Ascending aorta (tissue), 2 donors: ENCODE measurements at regions of chr3 and their contacts with region 1.

Region 1: GRCh38 chr3:41198950-41199865 is at the start of gene CTNNB1:
- DNase-seq: peak; percentile 74 to 96
- H3K4me3 ChIP-seq: peak within 1 kb of the TSS; percentile 100
- H3K27ac ChIP-seq: peak within 1 kb of the TSS; percentile 98 to 100
- H3K4me1 ChIP-seq: peaks cover 0 to 29% of the 10 kb centered on the region in 2 donors
- H3K27me3 ChIP-seq: no peaks in the 10 kb centered on the region
- CTCF ChIP-seq: no peak
- total RNA-seq, gene CTNNB1: 371 TPM

Region 2: DNA sequence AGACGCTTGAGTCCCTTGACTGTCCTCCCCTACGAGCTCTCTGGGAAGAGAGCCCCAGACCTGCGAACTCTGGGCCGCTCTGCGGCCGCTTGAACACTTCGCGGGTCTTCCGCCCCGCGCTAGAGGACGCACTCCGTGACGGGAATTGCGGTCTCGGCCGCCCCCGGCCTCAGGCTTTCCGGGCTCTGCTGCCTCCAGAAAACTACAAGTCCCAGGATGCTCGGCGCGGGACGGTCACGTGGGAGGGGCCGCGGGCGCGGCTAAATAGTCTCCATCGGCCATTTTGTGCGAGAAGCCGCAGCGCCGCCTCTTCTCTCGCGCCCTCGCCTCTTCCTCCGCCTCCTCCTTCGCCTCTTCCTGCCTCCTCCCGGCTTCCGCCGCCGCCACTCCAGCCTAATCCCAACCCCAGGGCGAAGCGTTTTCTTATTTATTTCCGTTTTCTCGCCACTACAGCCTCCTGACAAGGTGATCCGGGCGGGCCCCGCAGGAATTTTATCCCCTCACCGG is 889.7 kb before region 1 on chr3 and contains the start of gene EIF1B:
- intact Hi-C with region 1: loop called (anchors 5 kb)
- DNase-seq: peak; percentile 92 to 99
- H3K4me3 ChIP-seq: peak within 1 kb of the TSS; percentile 74
- H3K27ac ChIP-seq: peak within 1 kb of the TSS; percentile 84 to 97
- H3K4me1 ChIP-seq: peaks cover 4 to 19% of the 10 kb centered on the region in 2 donors
- H3K27me3 ChIP-seq: no peaks in the 10 kb centered on the region
- CTCF ChIP-seq: peak; percentile 79 to 89 (median 88)
- total RNA-seq, gene EIF1B: 21.7 TPM

Region 3: DNA sequence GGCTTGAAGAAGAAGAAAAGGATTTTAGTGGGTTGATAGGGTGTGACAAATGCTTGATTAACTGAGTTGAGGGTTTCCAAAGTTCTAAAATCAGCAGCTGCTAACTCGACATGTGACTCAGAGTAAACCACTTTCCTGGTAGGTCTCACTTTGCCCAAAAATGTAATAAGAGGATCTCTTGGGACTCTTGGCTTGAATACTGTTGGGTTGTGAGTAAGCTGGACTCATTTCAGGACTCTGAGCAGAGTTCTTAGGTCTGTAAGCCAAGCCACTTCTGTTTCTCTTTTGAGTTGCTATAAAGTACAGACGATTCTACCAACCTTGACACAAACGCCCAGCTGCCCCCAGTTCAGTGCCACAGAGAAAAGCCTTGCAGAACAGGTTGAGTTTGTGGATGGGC is 433.3 kb before region 1 on chr3:
- intact Hi-C with region 1: loop called (anchors 5 kb)
- DNase-seq: peak in 1 of 2 donors; percentile 71
- H3K4me3 ChIP-seq: peak overlapping the region in 1 of 2 donors; percentile 31
- H3K27ac ChIP-seq: peak overlapping the region; percentile 15 to 21
- H3K4me1 ChIP-seq: peaks cover 2 to 19% of the 10 kb centered on the region in 2 donors
- H3K27me3 ChIP-seq: no peaks in the 10 kb centered on the region
- CTCF ChIP-seq: no peak

Region 4: GRCh38 chr3:41000471-41000870 is 198.7 kb before region 1 on chr3:
- intact Hi-C with region 1: loop called (anchors 5 kb)
- DNase-seq: peak in 1 of 2 donors; percentile 83
- H3K4me3 ChIP-seq: no peak overlapping the region
- H3K27ac ChIP-seq: peak overlapping the region; percentile 58 to 62
- H3K4me1 ChIP-seq: peaks cover 0 to 22% of the 10 kb centered on the region in 2 donors
- H3K27me3 ChIP-seq: no peaks in the 10 kb centered on the region
- CTCF ChIP-seq: no peak

Region 5: GRCh38 chr3:41026394-41027177 is 172.6 kb before region 1 on chr3:
- intact Hi-C with region 1: no loop called
- DNase-seq: peak in 1 of 2 donors; percentile 71
- H3K4me3 ChIP-seq: no peak overlapping the region
- H3K27ac ChIP-seq: no peak overlapping the region
- H3K4me1 ChIP-seq: no peaks in the 10 kb centered on the region
- H3K27me3 ChIP-seq: no peaks in the 10 kb centered on the region
- CTCF ChIP-seq: no peak

Region 6: GRCh38 chr3:41234823-41235721 is 35.9 kb after region 1 on chr3:
- intact Hi-C with region 1: loop called (anchors 5 kb)
- DNase-seq: no peak
- H3K4me3 ChIP-seq: no peak overlapping the region
- H3K27ac ChIP-seq: peak overlapping the region; percentile 14 to 28
- H3K4me1 ChIP-seq: peaks cover 0 to 12% of the 10 kb centered on the region in 2 donors
- H3K27me3 ChIP-seq: no peaks in the 10 kb centered on the region
- CTCF ChIP-seq: no peak

Region 7: DNA sequence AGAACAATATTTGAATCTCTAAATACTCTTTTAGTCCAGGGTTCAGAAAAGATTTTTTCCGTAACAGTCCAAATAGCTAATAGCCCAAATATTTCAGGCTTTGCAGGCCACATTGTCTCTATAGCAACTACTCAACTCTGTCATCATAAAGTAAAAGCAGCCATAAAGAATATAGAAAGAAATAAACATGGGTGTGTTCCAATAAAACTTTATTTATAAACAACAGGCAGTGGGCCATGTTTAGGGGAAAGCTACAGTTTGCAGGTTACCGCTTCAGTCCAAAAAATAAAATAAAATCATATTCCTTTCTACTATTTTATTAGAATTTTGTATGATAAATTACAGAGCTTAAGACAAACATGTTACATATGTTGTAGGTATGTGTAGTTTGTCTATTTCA is 423.6 kb after region 1 on chr3:
- intact Hi-C with region 1: no loop called
- DNase-seq: no peak
- H3K4me3 ChIP-seq: no peak overlapping the region
- H3K27ac ChIP-seq: no peak overlapping the region
- H3K4me1 ChIP-seq: no peaks in the 10 kb centered on the region
- H3K27me3 ChIP-seq: no peaks in the 10 kb centered on the region
- CTCF ChIP-seq: no peak